IMR-90 (cell line): ENCODE measurements at regions of chr4 and their contacts with region 1.

Region 1: DNA sequence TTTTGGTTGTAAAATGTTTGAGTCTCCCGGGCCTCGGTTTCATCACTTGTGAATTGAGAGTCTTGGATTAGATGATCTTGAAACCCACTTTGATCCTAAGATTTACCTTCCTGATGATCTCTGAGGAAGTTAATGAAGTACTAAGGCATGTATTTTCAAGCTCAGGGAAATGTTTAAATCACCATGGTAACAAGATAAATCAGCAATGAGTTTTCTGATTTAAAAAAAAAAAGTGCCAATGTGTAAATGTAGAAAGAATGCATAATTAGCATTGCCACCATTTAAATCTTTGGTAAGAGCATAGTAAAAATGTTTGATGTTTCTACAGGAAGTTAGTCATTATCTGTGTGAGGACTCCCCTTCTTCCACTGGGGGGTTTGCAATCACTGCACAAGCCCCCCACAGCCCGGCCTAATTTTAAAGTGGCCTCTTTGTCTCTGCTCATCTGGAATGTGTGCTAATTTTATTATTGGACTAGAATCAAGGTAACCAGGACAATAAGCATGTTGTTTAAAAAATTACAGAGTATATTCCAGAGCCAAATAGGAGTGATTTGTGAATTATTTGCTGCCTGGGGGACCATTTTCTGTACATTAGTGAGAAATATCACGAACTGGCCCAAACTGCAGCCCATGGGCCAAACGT is 93.6 kb downstream of the SLC34A2 start:
- DNase-seq: no peak
- ATAC-seq: no peak
- H3K4me3 ChIP-seq: no peak overlapping the region
- H3K27ac ChIP-seq: no peak overlapping the region
- H3K4me1 ChIP-seq: no peaks in the 10 kb centered on the region
- H3K27me3 ChIP-seq: no peaks in the 10 kb centered on the region
- CTCF ChIP-seq: no peak
- POLR2A ChIP-seq: no peak
- RAD21 ChIP-seq: no peak

Region 2: DNA sequence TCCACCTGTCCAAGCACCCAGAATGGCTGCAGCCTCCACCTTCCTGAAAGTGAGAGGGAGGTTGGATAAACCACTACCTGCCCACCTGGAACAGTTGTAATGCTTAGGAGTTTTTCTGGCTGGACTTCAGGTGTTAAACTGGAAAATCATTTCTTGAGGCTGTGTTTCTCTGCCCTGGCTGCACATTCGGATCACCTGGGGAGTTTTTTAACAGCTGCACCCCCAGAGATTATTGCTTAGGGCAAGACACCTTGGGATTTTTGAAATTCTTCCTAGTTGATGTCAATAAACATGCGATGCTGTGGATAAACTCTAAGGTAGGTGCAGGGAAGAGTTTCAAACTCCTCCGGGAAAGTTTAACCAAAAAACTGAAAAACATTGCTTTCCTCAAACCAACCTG is 546.8 kb before region 1 on chr4:
- CTCF ChIA-PET with region 1: no interaction called
- POLR2A ChIA-PET with region 1: no interaction called
- dilution Hi-C with region 1: no loop called
- in situ Hi-C with region 1: no loop called
- intact Hi-C with region 1: loop called (anchors 2 kb)
- DNase-seq: no peak
- ATAC-seq: no peak
- H3K4me3 ChIP-seq: no peak overlapping the region
- H3K27ac ChIP-seq: no peak overlapping the region
- H3K4me1 ChIP-seq: no peaks in the 10 kb centered on the region
- H3K27me3 ChIP-seq: peaks cover 3% of the 10 kb centered on the region
- CTCF ChIP-seq: no peak
- POLR2A ChIP-seq: no peak
- RAD21 ChIP-seq: no peak

Region 3: GRCh38 chr4:25282061-25282460 is 467.2 kb before region 1 on chr4:
- CTCF ChIA-PET with region 1: no interaction called
- POLR2A ChIA-PET with region 1: no interaction called
- dilution Hi-C with region 1: no loop called
- in situ Hi-C with region 1: no loop called
- intact Hi-C with region 1: no loop called
- DNase-seq: no peak
- ATAC-seq: no peak
- H3K4me3 ChIP-seq: no peak overlapping the region
- H3K27ac ChIP-seq: no peak overlapping the region
- H3K4me1 ChIP-seq: no peaks in the 10 kb centered on the region
- H3K27me3 ChIP-seq: no peaks in the 10 kb centered on the region
- CTCF ChIP-seq: no peak
- POLR2A ChIP-seq: no peak
- RAD21 ChIP-seq: no peak

Region 4: GRCh38 chr4:25651682-25652189 is 97.5 kb before region 1 on chr4:
- CTCF ChIA-PET with region 1: no interaction called
- POLR2A ChIA-PET with region 1: no interaction called
- dilution Hi-C with region 1: no loop called
- in situ Hi-C with region 1: no loop called
- intact Hi-C with region 1: no loop called
- DNase-seq: no peak
- ATAC-seq: no peak
- H3K4me3 ChIP-seq: no peak overlapping the region
- H3K27ac ChIP-seq: no peak overlapping the region
- H3K4me1 ChIP-seq: no peaks in the 10 kb centered on the region
- H3K27me3 ChIP-seq: peaks cover 37% of the 10 kb centered on the region
- CTCF ChIP-seq: no peak
- POLR2A ChIP-seq: no peak
- RAD21 ChIP-seq: no peak